ENCODE measurements at regions of chr20 and their contacts with region 1.

Region 1: DNA sequence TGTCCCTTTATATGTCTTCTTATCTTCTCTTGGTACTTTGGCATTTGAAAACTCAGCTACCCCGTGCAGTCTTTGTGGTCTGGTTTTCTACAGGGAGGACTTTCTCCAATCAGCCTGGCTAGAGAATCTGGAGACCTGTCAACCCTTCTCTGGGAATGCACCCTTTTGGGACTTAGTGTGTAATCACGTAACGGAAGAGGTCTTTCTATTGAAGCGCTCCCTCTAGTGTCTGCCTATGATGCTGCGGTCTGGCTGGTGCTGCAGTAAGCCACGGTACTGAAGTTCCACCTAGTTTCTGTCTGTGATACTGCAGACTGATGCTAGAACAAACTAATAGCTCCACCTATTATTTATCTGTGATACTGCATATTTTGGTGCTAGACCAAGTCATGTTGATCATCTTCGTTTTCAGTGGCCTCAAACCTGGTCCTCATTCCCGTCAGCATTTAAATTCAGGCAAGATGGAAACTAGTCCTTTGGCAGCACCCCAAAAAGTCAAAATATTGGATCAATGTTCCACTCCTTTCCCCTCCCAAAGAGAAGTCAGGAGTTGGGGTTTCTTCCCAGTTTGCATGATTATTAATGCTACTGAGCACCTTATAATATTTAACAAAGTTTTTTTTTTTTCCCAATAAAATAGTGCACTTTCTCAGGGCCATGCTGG is 12.5 kb upstream of the SIRPB2 start:
- DNase-seq: peak; percentile 54 to 91 (median 73)
- ATAC-seq: peak; percentile 100
- H3K4me3 ChIP-seq: no peak overlapping the region
- H3K4me3 Mint-ChIP-seq: no peak overlapping the region
- H3K27ac ChIP-seq: no peak overlapping the region
- H3K27ac Mint-ChIP-seq: no peak overlapping the region
- H3K4me1 ChIP-seq: peaks cover 3% of the 10 kb centered on the region
- H3K4me1 Mint-ChIP-seq: peaks cover 5% of the 10 kb centered on the region
- H3K27me3 ChIP-seq: no peaks in the 10 kb centered on the region
- H3K27me3 Mint-ChIP-seq: peaks cover 30% of the 10 kb centered on the region
- CTCF ChIP-seq: peak; percentile 99

Region 2: GRCh38 chr20:1313236-1313964 is 190.3 kb before region 1 on chr20:
- CTCF ChIA-PET with region 1: interaction called, 14 read pairs
- POLR2A ChIA-PET with region 1: no interaction called
- intact Hi-C with region 1: loop called (anchors 1 kb)
- DNase-seq: peak; percentile 20 to 83 (median 69)
- ATAC-seq: peak; percentile 82
- H3K4me3 ChIP-seq: no peak overlapping the region
- H3K4me3 Mint-ChIP-seq: no peak overlapping the region
- H3K27ac ChIP-seq: no peak overlapping the region
- H3K27ac Mint-ChIP-seq: no peak overlapping the region
- H3K4me1 ChIP-seq: peaks cover 6% of the 10 kb centered on the region
- H3K4me1 Mint-ChIP-seq: peaks cover 8% of the 10 kb centered on the region
- H3K27me3 ChIP-seq: no peaks in the 10 kb centered on the region
- H3K27me3 Mint-ChIP-seq: no peaks in the 10 kb centered on the region
- CTCF ChIP-seq: peak; percentile 99

Region 3: GRCh38 chr20:1397710-1398109 is 106.0 kb before region 1 on chr20:
- CTCF ChIA-PET with region 1: no interaction called
- POLR2A ChIA-PET with region 1: no interaction called
- intact Hi-C with region 1: no loop called
- DNase-seq: no peak
- ATAC-seq: no peak
- H3K4me3 ChIP-seq: no peak overlapping the region
- H3K4me3 Mint-ChIP-seq: no peak overlapping the region
- H3K27ac ChIP-seq: no peak overlapping the region
- H3K27ac Mint-ChIP-seq: no peak overlapping the region
- H3K4me1 ChIP-seq: peaks cover 15% of the 10 kb centered on the region
- H3K4me1 Mint-ChIP-seq: peaks cover 21% of the 10 kb centered on the region
- H3K27me3 ChIP-seq: peaks cover 0 to 2% of the 10 kb centered on the region in 2 experiments
- H3K27me3 Mint-ChIP-seq: no peaks in the 10 kb centered on the region
- CTCF ChIP-seq: no peak

Region 4: DNA sequence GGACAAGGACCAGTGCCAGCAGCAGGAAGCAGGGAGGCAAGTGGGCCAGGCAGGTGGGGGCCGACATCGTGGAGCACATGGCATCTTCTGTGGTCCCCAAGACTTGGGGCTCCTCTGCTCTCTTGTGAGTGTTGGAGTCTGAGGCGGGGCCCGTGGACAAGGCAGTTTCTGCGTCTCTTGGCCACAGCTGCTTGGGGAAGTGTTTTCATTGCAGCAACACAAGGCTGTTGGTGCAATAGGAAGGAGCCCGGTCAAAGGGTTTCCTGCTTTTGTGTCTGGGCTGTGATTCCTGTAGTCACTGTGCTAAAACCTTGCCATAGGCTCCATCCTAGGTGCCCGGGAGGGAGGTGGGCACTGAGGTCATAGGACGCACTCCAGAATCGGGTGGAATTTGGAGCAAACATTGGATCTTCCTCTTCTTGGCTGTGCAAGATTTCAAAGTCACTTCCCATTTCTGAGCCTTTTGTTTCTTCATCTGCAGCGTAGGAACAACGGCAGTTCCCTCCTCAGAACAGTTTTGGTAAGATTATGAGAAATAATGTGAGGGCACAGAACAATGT is 12.3 kb before region 1 on chr20 and contains the start of gene SIRPB2:
- CTCF ChIA-PET with region 1: interaction called, 31 read pairs
- POLR2A ChIA-PET with region 1: no interaction called
- intact Hi-C with region 1: no loop called
- DNase-seq: peak in 1 of 9 experiments; percentile 22
- ATAC-seq: no peak
- H3K4me3 ChIP-seq: no peak within 1 kb of the TSS
- H3K4me3 Mint-ChIP-seq: no peak within 1 kb of the TSS
- H3K27ac ChIP-seq: no peak within 1 kb of the TSS
- H3K27ac Mint-ChIP-seq: no peak within 1 kb of the TSS
- H3K4me1 ChIP-seq: no peaks in the 10 kb centered on the region
- H3K4me1 Mint-ChIP-seq: peaks cover 4% of the 10 kb centered on the region
- H3K27me3 ChIP-seq: peaks cover 2 to 4% of the 10 kb centered on the region in 2 experiments
- H3K27me3 Mint-ChIP-seq: peaks cover 14% of the 10 kb centered on the region
- CTCF ChIP-seq: no peak
- total RNA-seq, gene SIRPB2: not detected